ENCODE measurements at regions of chr1 and their contacts with region 1.

Region 1: GRCh38 chr1:70896224-70896623 is 151.4 kb downstream of the PTGER3 start:
- DNase-seq: no peak
- ATAC-seq: no peak
- H3K4me3 ChIP-seq: no peak overlapping the region
- H3K27ac ChIP-seq: no peak overlapping the region
- H3K4me1 ChIP-seq: peaks cover 0 to 11% (median 0%) of the 10 kb centered on the region in 9 donors
- H3K27me3 ChIP-seq: peaks cover 0 to 2% (median 0%) of the 10 kb centered on the region in 7 donors
- CTCF ChIP-seq: peak in 6 of 9 donors; percentile 7 to 36 (median 24)

Region 2: DNA sequence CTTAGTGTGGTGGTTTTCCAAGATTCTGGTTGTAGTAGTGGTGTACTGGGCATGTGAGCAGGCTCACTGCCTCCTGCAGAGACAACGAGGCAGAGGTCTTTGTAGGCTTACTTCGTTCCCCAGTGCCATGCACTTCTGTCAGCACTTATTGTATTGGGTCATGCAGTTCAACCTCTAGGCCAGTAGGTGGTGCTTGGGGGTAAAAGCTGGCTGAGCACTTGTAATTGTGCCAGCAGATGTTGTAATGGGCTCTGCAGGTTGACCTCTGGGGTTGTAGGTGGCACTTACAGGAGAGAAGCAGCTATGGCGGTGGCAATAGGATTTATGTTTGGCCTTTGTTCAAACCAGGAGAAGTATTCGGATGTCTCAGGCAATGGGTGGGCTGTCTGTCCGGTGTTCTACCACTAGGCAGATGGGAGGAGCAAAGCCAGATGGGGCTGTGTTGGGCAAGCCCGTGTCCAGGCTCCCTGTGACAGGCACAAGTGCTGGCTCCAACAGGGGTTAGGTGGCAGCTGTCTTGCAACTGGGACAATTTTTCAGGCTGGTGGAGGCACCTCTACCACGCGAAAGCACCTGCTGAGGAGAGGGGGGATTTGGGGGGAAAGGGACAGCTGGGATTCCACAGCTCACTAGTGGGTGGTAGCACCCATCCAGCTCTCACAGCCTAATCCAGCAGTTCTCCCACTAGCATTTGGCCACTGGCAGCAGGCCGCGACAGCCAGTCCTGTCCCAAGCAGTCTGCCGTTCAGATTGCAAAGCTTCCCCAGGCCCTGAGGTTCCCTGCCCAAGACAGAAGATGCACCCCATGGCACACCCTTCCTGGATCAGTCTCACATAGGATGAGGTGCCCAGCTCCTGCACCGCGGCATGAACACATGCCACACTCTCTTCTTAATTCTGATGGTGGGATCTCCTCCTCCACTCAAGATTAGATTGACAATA is 210.7 kb before region 1 on chr1:
- intact Hi-C with region 1: loop called in 3 of 10 experiments (anchors 5 to 10 kb)
- DNase-seq: peak in 1 of 2 donors; percentile 54
- ATAC-seq: peak; percentile 65 to 90 (median 80)
- H3K4me3 ChIP-seq: no peak overlapping the region
- H3K27ac ChIP-seq: no peak overlapping the region
- H3K4me1 ChIP-seq: no peaks in the 10 kb centered on the region
- H3K27me3 ChIP-seq: peaks cover 0 to 8% (median 0%) of the 10 kb centered on the region in 7 donors
- CTCF ChIP-seq: peak; percentile 67 to 86 (median 79)

Region 3: DNA sequence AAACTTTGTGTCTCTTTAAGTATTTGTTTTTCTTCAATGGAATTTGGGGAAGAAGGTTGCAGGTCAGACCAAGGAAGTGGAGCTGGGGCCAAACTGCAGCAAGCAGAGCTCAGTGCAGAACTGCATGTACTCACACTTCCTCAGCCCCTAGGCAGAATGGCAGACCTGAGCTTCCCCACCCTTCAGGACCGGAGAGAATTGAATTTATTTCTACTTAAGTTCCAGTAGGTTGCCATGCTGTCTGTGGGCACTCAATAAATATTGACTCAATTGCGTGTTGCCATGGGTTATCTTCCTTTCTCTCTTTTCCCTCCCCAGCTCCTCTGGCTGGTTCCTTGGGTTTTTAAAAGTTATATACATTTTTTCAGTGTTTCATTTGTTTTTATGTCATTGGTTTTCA is 22.1 kb before region 1 on chr1:
- intact Hi-C with region 1: no loop called
- DNase-seq: no peak
- ATAC-seq: peak in 2 of 8 donors; percentile 49 to 61
- H3K4me3 ChIP-seq: no peak overlapping the region
- H3K27ac ChIP-seq: no peak overlapping the region
- H3K4me1 ChIP-seq: peaks cover 0 to 23% (median 5%) of the 10 kb centered on the region in 9 donors
- H3K27me3 ChIP-seq: no peaks in the 10 kb centered on the region
- CTCF ChIP-seq: no peak